CD8-positive, alpha-beta memory T cell (primary cell): ENCODE measurements at regions of chr4 and their contacts with region 1.

Region 1: DNA sequence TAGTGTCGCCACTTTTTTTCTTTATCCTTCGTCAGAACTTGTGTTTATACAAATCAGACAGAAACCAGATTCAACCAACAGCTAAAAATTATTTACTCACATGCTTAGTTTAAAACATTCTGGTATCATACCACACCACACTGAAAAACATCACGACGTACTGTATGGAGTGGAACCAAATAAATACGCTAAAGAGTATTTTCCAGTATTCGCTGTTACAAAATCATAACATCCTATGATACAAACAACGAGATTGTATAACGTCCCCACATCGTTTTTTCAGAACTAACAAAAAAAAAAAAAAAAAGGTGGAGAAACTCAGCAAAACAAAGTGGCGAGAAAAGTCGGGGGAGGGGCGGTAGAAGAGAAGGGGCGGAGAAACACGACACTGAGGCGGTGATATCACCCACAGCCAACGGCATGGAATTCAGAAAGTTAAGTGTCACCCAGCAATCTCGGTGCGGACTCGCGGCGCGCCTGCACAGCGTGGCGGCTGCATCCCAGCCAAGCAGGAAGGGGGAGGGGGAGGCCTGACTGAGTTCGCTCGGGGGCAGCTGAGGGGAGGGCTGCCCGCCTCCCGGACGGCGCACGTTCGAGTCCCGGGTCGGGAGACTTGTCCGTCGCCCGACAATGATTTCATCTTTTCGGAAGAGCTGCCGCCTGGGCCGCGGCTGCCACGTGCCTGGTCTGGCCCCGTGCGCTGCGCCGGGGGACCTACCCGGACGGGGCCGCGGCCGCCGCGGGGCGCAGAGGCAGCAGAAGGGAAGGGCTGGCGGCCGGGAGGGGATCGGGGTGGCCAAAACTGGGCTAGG is 920 bp downstream of the SETD7 start:
- DNase-seq: peak; percentile 58 to 91 (median 76)
- H3K4me3 ChIP-seq: peak overlapping the region; percentile 81
- H3K4me3 Mint-ChIP-seq: peak overlapping the region; percentile 91 to 99 (median 97)
- H3K27ac ChIP-seq: peak overlapping the region; percentile 79
- H3K27ac Mint-ChIP-seq: peak overlapping the region; percentile 93 to 99 (median 96)
- H3K4me1 ChIP-seq: peaks cover 18% of the 10 kb centered on the region
- H3K4me1 Mint-ChIP-seq: peaks cover 39 to 74% (median 49%) of the 10 kb centered on the region in 3 donors
- H3K27me3 ChIP-seq: no peaks in the 10 kb centered on the region
- H3K27me3 Mint-ChIP-seq: peaks cover 4 to 13% of the 10 kb centered on the region in 2 donors

Region 2: GRCh38 chr4:139453371-139454110 is 101.6 kb before region 1 on chr4:
- CTCF ChIA-PET with region 1: interaction called, 7 read pairs
- POLR2A ChIA-PET with region 1: interaction called, 31 read pairs
- DNase-seq: peak; percentile 94 to 98 (median 97)
- H3K4me3 ChIP-seq: peak overlapping the region; percentile 92
- H3K4me3 Mint-ChIP-seq: peak overlapping the region; percentile 87 to 99 (median 96)
- H3K27ac ChIP-seq: peak overlapping the region; percentile 96
- H3K27ac Mint-ChIP-seq: peak overlapping the region; percentile 98 to 99 (median 99)
- H3K4me1 ChIP-seq: peaks cover 51% of the 10 kb centered on the region
- H3K4me1 Mint-ChIP-seq: peaks cover 61 to 65% (median 61%) of the 10 kb centered on the region in 3 donors
- H3K27me3 ChIP-seq: no peaks in the 10 kb centered on the region
- H3K27me3 Mint-ChIP-seq: peaks cover 0 to 2% of the 10 kb centered on the region in 2 donors

Region 3: GRCh38 chr4:139530833-139531427 is 24.2 kb before region 1 on chr4:
- CTCF ChIA-PET with region 1: interaction called, 11 read pairs
- POLR2A ChIA-PET with region 1: interaction called, 4 read pairs
- DNase-seq: peak; percentile 46 to 69 (median 52)
- H3K4me3 ChIP-seq: no peak overlapping the region
- H3K4me3 Mint-ChIP-seq: peak overlapping the region in 1 of 7 donors; percentile 52
- H3K27ac ChIP-seq: no peak overlapping the region
- H3K27ac Mint-ChIP-seq: peak overlapping the region in 5 of 8 donors; percentile 25 to 82 (median 51)
- H3K4me1 ChIP-seq: peaks cover 11% of the 10 kb centered on the region
- H3K4me1 Mint-ChIP-seq: peaks cover 26 to 35% (median 30%) of the 10 kb centered on the region in 3 donors
- H3K27me3 ChIP-seq: no peaks in the 10 kb centered on the region
- H3K27me3 Mint-ChIP-seq: no peaks in the 10 kb centered on the region